Activated CD8-positive, alpha-beta memory T cell treated with anti-CD3 and anti-CD28 coated beads, Interleukin-2, amount 10 ng/mL, durations not matched to agents 7 days and 5 days (primary cell): ENCODE measurements at regions of chr20 and their contacts with region 1.

Region 1: DNA sequence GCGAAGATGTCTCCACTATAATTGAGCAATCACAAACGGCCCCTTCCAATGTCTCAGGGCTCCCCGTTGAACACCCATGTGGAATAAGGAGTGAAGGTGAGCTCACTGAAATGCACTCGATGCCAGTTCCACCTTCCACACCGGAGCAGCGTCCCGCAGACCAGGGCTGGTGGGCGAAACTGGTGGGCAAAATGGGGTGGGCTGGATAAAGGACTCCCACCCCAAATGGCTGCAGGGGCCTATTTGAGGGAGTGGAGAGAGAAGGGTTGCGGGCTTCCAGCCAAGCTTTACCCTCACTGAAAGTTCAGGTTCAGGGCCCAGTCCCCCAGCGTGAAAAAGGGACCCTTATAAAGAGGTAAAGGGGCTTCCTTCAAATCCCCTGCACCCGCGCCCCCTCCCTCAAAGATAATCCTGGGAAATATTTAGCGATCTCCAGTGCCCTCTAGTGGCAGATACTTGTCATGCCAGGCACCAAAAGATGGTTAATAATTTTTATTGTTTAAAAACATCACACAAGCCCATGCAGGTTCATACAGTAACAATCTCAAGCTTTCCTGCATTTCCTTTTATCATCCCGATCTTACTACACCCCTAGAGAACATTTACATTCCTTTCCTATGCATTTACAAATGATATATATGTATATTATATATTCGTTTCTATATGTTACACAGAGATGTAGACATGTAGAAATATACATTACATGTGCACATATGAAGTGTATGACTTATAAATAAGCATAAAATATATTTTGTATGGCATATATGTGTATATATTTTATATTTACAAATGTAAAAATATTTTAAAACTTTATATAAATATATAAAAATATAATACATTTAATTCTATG is 58.2 kb upstream of the NKX2-2 start:
- DNase-seq: no peak
- ATAC-seq: no peak
- H3K4me3 Mint-ChIP-seq: no peak overlapping the region
- H3K27ac Mint-ChIP-seq: no peak overlapping the region
- H3K4me1 Mint-ChIP-seq: peaks cover 6% of the 10 kb centered on the region
- H3K27me3 Mint-ChIP-seq: peaks cover 27% of the 10 kb centered on the region

Region 2: DNA sequence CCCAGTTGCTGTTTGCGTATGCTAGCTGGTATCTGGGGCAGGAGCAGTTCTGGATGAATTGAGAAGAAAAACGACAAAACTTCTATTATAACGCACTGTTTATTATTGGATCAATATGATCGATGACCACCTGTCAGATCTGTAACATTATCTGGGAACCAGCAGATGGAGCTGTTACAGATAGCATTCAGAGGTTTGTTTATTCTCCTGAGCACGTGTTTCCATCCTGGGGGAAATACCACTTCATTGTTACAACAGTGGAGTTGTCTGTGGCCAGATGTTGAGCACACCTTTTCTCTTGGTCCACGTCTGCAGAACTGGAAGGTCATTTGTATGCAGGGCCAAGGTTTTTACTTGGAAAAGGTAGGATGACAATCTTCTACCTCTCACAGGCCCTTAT is 42.2 kb before region 1 on chr20:
- CTCF ChIA-PET with region 1: interaction called, 19 read pairs
- DNase-seq: peak; percentile 2
- ATAC-seq: no peak
- H3K4me3 Mint-ChIP-seq: no peak overlapping the region
- H3K27ac Mint-ChIP-seq: no peak overlapping the region
- H3K4me1 Mint-ChIP-seq: no peaks in the 10 kb centered on the region
- H3K27me3 Mint-ChIP-seq: peaks cover 59% of the 10 kb centered on the region

Region 3: DNA sequence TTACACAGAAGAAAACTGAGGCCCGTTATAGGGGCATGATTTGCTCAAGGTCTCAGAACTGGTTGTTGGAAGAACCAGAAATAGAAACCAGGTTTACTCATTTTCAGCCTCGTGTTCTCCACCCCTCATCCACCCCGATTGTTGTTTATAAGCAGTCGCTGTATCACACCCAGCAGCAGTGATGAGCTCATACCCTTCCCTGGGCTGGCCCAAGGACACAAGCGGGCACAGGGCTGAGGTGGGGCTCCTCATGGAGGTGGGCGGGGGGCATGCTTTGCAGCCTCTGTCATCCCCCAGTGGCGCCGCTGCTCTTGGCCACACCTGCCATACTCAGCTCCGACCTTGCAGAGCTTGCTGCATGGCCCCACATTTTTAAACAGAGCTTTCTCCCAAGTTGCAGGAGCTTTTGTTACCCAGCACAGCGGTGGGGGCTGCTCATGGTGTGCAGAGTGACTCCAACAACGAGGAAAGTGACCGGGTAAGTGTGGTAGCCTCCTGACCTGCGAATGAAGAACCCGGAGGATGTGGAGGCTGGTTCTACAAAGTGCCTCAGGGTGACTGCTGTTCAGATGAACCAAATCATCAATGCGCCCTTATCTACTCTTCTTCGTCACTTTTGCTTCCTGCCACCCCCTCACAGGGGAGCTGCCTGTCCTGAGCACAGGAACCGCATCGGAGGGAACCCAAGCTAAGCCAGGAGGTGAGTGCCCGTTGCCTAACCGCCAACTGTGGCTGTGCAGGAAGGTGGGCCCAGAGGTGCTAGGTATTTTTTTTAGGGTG is 14.6 kb before region 1 on chr20:
- CTCF ChIA-PET with region 1: interaction called, 16 read pairs
- DNase-seq: peak; percentile 44
- ATAC-seq: peak; percentile 67
- H3K4me3 Mint-ChIP-seq: no peak overlapping the region
- H3K27ac Mint-ChIP-seq: peak overlapping the region; percentile 65
- H3K4me1 Mint-ChIP-seq: peaks cover 5% of the 10 kb centered on the region
- H3K27me3 Mint-ChIP-seq: peaks cover 17% of the 10 kb centered on the region